Activated T-helper 2 cell treated with anti-CD3 and anti-CD28 coated beads, Interferon-gamma antibody, Interleukin-2, Interleukin-4, amounts not matched to agents 10 μg/mL and 5 μg/mL and 100 μg/mL, durations not matched to agents 14 hours and 24 hours and 36 hours (primary cell): ENCODE measurements at regions of chr6 and their contacts with region 1.

Region 1: GRCh38 chr6:45421709-45422502 is 44.2 kb upstream of the SUPT3H start:
- DNase-seq: peak; percentile 64
- H3K4me3 Mint-ChIP-seq: peak overlapping the region; percentile 100
- H3K27ac Mint-ChIP-seq: peak overlapping the region; percentile 99
- H3K4me1 Mint-ChIP-seq: peaks cover 45% of the 10 kb centered on the region
- H3K27me3 Mint-ChIP-seq: no peaks in the 10 kb centered on the region

Region 2: DNA sequence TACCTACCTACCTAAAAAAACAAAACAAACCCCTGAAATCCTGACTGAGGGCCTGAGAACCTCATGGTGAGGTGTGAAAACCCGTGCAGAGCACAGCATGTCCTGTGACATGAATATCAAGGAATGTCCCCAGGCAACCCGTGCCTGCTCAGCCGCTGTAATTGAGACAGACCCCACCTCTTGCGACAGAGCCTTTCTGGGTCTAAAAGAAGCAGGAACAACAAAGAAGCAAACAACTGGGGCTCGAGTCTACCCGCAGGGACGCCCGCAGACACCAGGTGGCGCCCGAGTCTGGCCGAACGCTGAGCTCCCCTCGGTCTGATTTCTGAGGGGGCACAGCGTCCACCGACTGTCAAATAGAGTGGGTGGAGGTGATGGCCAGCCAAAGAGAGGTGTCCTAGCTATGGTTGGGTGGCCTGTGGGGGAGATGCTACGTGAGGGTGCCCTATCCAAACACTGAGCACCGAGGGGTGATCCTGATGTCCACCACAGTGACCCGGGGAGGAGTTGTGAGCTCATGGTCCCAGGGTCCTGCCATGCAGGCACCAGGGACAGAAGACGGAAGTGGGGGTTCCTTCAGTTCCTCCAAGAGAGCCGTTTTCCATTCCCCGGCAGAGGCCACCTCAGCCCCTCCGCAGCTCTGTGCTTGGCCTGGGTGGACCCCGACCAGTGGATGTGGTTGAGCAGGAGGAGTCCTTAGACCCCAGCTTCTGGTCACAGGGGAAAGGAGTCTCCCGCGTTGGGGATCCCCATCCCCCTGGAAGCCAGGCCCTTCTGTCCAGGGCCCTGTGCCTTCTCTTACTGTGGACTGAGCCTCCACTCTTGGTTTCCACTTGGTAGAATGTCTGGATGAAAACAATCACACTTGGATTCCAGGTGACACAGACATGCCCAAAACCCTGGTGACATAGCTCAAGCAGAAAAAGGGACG is 766.2 kb before region 1 on chr6:
- intact Hi-C with region 1: loop called (anchors 2 kb)
- DNase-seq: peak; percentile 55
- H3K4me3 Mint-ChIP-seq: peak overlapping the region; percentile 53
- H3K27ac Mint-ChIP-seq: peak overlapping the region; percentile 89
- H3K4me1 Mint-ChIP-seq: peaks cover 12% of the 10 kb centered on the region
- H3K27me3 Mint-ChIP-seq: no peaks in the 10 kb centered on the region

Region 3: GRCh38 chr6:45001663-45002062 is 420.2 kb before region 1 on chr6:
- intact Hi-C with region 1: loop called (anchors 5 kb)
- DNase-seq: peak; percentile 24
- H3K4me3 Mint-ChIP-seq: peak overlapping the region; percentile 5
- H3K27ac Mint-ChIP-seq: peak overlapping the region; percentile 93
- H3K4me1 Mint-ChIP-seq: peaks cover 39% of the 10 kb centered on the region
- H3K27me3 Mint-ChIP-seq: no peaks in the 10 kb centered on the region

Region 4: GRCh38 chr6:45310118-45310788 is 111.7 kb before region 1 on chr6:
- intact Hi-C with region 1: no loop called
- DNase-seq: peak; percentile 16
- H3K4me3 Mint-ChIP-seq: peak overlapping the region; percentile 3
- H3K27ac Mint-ChIP-seq: peak overlapping the region; percentile 10
- H3K4me1 Mint-ChIP-seq: peaks cover 46% of the 10 kb centered on the region
- H3K27me3 Mint-ChIP-seq: no peaks in the 10 kb centered on the region

Region 5: DNA sequence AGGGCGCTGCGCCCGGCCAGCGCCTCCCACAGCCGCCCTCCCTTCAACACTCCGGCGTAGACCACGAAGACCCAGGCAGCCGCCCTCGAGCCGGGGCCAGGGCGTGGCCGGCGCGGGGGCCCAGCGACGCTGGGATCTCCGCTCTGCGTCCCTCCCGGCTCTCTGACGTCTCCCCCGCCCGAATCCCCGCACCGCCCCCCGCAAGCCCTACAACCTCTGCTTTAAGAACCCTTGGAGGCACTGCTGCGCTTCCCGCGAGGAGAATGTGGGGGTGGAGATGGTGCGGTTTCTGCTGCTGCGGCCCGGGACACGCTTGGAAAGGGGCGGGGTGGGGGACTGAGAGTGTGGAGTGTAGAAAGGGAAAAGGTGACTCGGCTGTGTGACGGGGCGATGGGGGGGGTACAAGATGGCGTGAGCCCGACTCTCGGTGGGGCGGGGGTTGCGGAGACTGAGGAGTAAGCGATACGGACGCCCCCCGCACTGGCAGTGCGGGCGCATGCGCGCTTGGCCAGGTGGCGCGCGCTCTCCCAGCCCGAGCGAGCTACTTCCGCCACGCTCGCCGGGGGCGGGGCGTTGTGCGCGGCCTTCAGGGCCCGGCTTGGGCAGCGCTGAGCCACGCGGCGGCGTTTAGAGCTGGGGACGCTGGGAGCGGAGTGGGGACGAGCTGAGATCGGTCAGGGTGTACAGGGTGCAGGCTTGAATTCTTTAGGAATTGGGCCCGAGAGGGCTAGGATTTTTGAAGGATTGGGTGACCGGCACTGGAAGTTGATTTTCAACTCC is 44.2 kb before region 1 on chr6 and contains the start of gene SUPT3H:
- intact Hi-C with region 1: loop called (anchors 1 kb)
- DNase-seq: peak; percentile 89
- H3K4me3 Mint-ChIP-seq: peak within 1 kb of the TSS; percentile 99
- H3K27ac Mint-ChIP-seq: peak within 1 kb of the TSS; percentile 100
- H3K4me1 Mint-ChIP-seq: peaks cover 23% of the 10 kb centered on the region
- H3K27me3 Mint-ChIP-seq: no peaks in the 10 kb centered on the region
- total RNA-seq, gene SUPT3H: 14.8 and 19.4 TPM in 2 replicates

Region 6: GRCh38 chr6:45595010-45595851 is 173.3 kb after region 1 on chr6:
- intact Hi-C with region 1: loop called (anchors 1 kb)
- DNase-seq: no peak
- H3K4me3 Mint-ChIP-seq: peak overlapping the region; percentile 60
- H3K27ac Mint-ChIP-seq: peak overlapping the region; percentile 88
- H3K4me1 Mint-ChIP-seq: peaks cover 65% of the 10 kb centered on the region
- H3K27me3 Mint-ChIP-seq: no peaks in the 10 kb centered on the region

Region 7: GRCh38 chr6:45640081-45640491 is 218.2 kb after region 1 on chr6:
- intact Hi-C with region 1: no loop called
- DNase-seq: no peak
- H3K4me3 Mint-ChIP-seq: no peak overlapping the region
- H3K27ac Mint-ChIP-seq: peak overlapping the region; percentile 31
- H3K4me1 Mint-ChIP-seq: peaks cover 24% of the 10 kb centered on the region
- H3K27me3 Mint-ChIP-seq: no peaks in the 10 kb centered on the region

Region 8: DNA sequence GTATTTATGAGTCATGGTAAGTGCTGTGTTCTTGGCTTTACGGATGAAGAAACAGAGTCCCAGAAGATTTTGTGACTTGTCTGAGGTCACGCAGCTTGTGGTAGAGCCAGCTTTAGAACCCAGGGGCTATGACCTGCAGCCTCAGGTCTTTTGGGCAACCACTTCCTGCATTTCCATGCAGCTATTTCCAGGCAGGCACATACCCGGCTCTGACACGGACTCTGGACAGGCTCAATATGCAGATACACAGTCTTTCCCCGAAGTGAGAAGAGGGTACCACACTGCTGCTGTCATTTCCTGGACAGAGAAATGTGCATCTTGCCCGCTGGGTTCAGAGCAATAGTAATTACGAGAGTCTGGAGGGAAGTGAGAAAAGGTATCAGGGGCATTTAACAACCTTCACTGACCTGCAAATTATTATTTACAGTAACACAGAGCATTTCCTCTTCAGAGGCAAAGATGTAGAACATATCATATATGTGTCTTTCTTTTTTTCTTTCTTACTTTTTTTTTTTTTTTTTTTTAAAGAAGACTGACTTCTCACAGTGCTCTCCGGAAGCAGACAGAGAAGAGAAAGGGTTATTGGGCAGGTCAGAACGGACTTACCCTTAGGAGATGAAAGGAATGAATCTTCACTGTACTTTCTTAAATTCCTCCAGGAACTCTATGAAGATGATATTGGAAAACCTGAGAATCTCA is 408.7 kb after region 1 on chr6:
- intact Hi-C with region 1: loop called (anchors 2 kb)
- DNase-seq: peak; percentile 48
- H3K4me3 Mint-ChIP-seq: peak overlapping the region; percentile 79
- H3K27ac Mint-ChIP-seq: peak overlapping the region; percentile 94
- H3K4me1 Mint-ChIP-seq: peaks cover 61% of the 10 kb centered on the region
- H3K27me3 Mint-ChIP-seq: no peaks in the 10 kb centered on the region